OCI-LY7 (cell line): ENCODE measurements at regions of chr1 and their contacts with region 1.

Region 1: GRCh38 chr1:31938174-31938950 is at the start of gene PTP4A2:
- DNase-seq: peak; percentile 94
- H3K4me3 ChIP-seq: peak within 1 kb of the TSS; percentile 91
- H3K27ac ChIP-seq: peak within 1 kb of the TSS; percentile 75
- H3K4me1 ChIP-seq: peaks cover 78% of the 10 kb centered on the region
- CTCF ChIP-seq: peak; percentile 40; the same call in 1 of the 2 replicates
- total RNA-seq, gene PTP4A2: 208 and 211 TPM in 2 replicates

Region 2: GRCh38 chr1:31831397-31832378 is 106.7 kb before region 1 on chr1:
- CTCF ChIA-PET with region 1: interaction called, 3 read pairs
- POLR2A ChIA-PET with region 1: interaction called, 6 read pairs
- intact Hi-C with region 1: loop called (anchors 1 kb)
- DNase-seq: no peak
- H3K4me3 ChIP-seq: no peak overlapping the region
- H3K27ac ChIP-seq: no peak overlapping the region
- H3K4me1 ChIP-seq: peaks cover 44% of the 10 kb centered on the region
- CTCF ChIP-seq: no peak

Region 3: DNA sequence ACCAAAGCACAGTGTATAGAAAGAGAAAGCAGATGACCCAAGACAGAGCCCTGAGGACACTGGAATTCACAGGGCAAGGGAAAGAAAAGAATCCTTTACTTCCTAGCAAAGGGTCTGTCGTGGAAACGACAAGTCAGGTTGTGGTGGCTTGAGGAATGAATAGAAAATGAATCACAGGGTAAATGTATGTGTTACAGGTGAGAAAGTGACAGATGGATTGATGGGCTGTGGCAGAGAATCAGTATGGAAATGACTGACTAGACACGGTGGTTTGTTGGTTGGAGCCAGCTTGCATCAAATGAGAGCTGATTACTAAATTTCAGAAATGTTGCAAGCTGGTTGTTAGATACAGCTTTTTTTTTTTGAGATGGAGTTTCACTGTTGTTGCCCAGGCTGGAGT is 47.1 kb before region 1 on chr1:
- CTCF ChIA-PET with region 1: no interaction called
- POLR2A ChIA-PET with region 1: interaction called, 4 read pairs
- intact Hi-C with region 1: loop called (anchors 2 kb)
- DNase-seq: no peak
- H3K4me3 ChIP-seq: no peak overlapping the region
- H3K27ac ChIP-seq: no peak overlapping the region
- H3K4me1 ChIP-seq: peaks cover 27% of the 10 kb centered on the region
- CTCF ChIP-seq: no peak

Region 4: GRCh38 chr1:31923901-31924535 is 14.3 kb before region 1 on chr1:
- CTCF ChIA-PET with region 1: no interaction called
- POLR2A ChIA-PET with region 1: interaction called, 14 read pairs
- intact Hi-C with region 1: no loop called
- DNase-seq: no peak
- H3K4me3 ChIP-seq: no peak overlapping the region
- H3K27ac ChIP-seq: peak overlapping the region; percentile 35
- H3K4me1 ChIP-seq: peaks cover 77% of the 10 kb centered on the region
- CTCF ChIP-seq: no peak

Region 5: GRCh38 chr1:31955917-31956736 is 17.8 kb after region 1 on chr1:
- CTCF ChIA-PET with region 1: interaction called, 3 read pairs
- POLR2A ChIA-PET with region 1: interaction called, 15 read pairs
- intact Hi-C with region 1: loop called (anchors 2 kb)
- DNase-seq: no peak
- H3K4me3 ChIP-seq: no peak overlapping the region
- H3K27ac ChIP-seq: no peak overlapping the region
- H3K4me1 ChIP-seq: peaks cover 16% of the 10 kb centered on the region
- CTCF ChIP-seq: no peak

Region 6: GRCh38 chr1:32013386-32014198 is 75.2 kb after region 1 on chr1 and contains the start of gene KHDRBS1:
- CTCF ChIA-PET with region 1: no interaction called
- POLR2A ChIA-PET with region 1: no interaction called
- intact Hi-C with region 1: loop called (anchors 2 kb)
- DNase-seq: peak; percentile 99
- H3K4me3 ChIP-seq: peak within 1 kb of the TSS; percentile 99
- H3K27ac ChIP-seq: peak within 1 kb of the TSS; percentile 84
- H3K4me1 ChIP-seq: peaks cover 23% of the 10 kb centered on the region
- CTCF ChIP-seq: no peak
- total RNA-seq, gene KHDRBS1: 87.7 and 94.7 TPM in 2 replicates